Posterior cingulate gyrus (tissue), 11 donors: ENCODE measurements at regions of chr1 and their contacts with region 1.

Region 1: GRCh38 chr1:32063261-32063681 is 9.5 kb upstream of the TMEM39B start:
- DNase-seq: no peak

Region 2: GRCh38 chr1:31663622-31664452 is 399.4 kb before region 1 on chr1:
- intact Hi-C with region 1: loop called (anchors 10 kb)
- DNase-seq: peak in 9 of 10 donors; percentile 43 to 95 (median 76)

Region 3: GRCh38 chr1:31959521-31960340 is 103.5 kb before region 1 on chr1:
- intact Hi-C with region 1: loop called (anchors 1 kb)
- DNase-seq: no peak